GM12878 (cell line): ENCODE measurements at regions of chr20 and their contacts with region 1.

Region 1: GRCh38 chr20:52242237-52243230 is 51.0 kb upstream of the ZFP64 start:
- DNase-seq: no peak
- ATAC-seq: no peak
- H3K4me3 ChIP-seq: no peak overlapping the region
- H3K27ac ChIP-seq: no peak overlapping the region
- H3K4me1 ChIP-seq: no peaks in the 10 kb centered on the region
- H3K27me3 ChIP-seq: no peaks in the 10 kb centered on the region
- CTCF ChIP-seq: peak in 2 of 3 experiments; percentile 6 to 35; a peak in 3 of 6 replicates
- EP300 ChIP-seq: no peak
- POLR2A ChIP-seq: no peak
- RAD21 ChIP-seq: no peak

Region 2: GRCh38 chr20:51695574-51696303 is 546.8 kb before region 1 on chr20:
- CTCF ChIA-PET with region 1: no interaction called
- POLR2A ChIA-PET with region 1: no interaction called
- RAD21 ChIA-PET with region 1: no interaction called
- SMC1A ChIA-PET with region 1: no interaction called
- in situ Hi-C with region 1: no loop called
- intact Hi-C with region 1: no loop called
- DNase-seq: no peak
- ATAC-seq: no peak
- H3K4me3 ChIP-seq: no peak overlapping the region
- H3K27ac ChIP-seq: no peak overlapping the region
- H3K4me1 ChIP-seq: no peaks in the 10 kb centered on the region
- H3K27me3 ChIP-seq: peaks cover 4% of the 10 kb centered on the region in 2 experiments; a peak in 3 of 4 replicates
- CTCF ChIP-seq: no peak
- EP300 ChIP-seq: no peak
- POLR2A ChIP-seq: no peak
- RAD21 ChIP-seq: no peak

Region 3: GRCh38 chr20:52083627-52084232 is 158.8 kb before region 1 on chr20:
- CTCF ChIA-PET with region 1: no interaction called
- POLR2A ChIA-PET with region 1: no interaction called
- RAD21 ChIA-PET with region 1: no interaction called
- SMC1A ChIA-PET with region 1: no interaction called
- in situ Hi-C with region 1: no loop called
- intact Hi-C with region 1: no loop called
- DNase-seq: no peak
- ATAC-seq: peak; percentile 34; the same call in 1 of the 3 replicates
- H3K4me3 ChIP-seq: no peak overlapping the region
- H3K27ac ChIP-seq: no peak overlapping the region
- H3K4me1 ChIP-seq: no peaks in the 10 kb centered on the region
- H3K27me3 ChIP-seq: no peaks in the 10 kb centered on the region
- CTCF ChIP-seq: peak; percentile 35 to 52 (median 40); a peak in 5 of 6 replicates
- EP300 ChIP-seq: no peak
- POLR2A ChIP-seq: no peak
- RAD21 ChIP-seq: peak; percentile 60

Region 4: DNA sequence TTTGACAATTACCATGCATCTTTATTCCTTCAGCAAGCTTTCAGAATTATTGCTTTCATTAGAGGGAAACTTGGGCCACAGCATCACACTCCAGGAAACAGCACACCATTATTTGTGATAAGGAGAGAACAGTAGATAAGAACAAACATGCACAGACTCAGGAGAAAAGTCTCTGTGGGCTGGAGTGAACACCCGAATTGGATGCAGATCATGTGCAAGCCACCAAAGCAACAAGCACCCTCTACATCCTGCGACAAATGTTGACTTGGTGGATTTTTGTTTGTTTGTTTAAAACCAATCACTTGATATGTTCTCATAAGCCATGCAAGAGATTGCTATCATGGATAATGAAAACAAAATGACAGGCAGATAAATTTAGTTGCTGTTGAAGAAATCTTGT is 16.8 kb after region 1 on chr20:
- CTCF ChIA-PET with region 1: no interaction called
- POLR2A ChIA-PET with region 1: no interaction called
- RAD21 ChIA-PET with region 1: no interaction called
- SMC1A ChIA-PET with region 1: no interaction called
- in situ Hi-C with region 1: no loop called
- intact Hi-C with region 1: no loop called
- DNase-seq: no peak
- ATAC-seq: no peak
- H3K4me3 ChIP-seq: no peak overlapping the region
- H3K27ac ChIP-seq: no peak overlapping the region
- H3K4me1 ChIP-seq: no peaks in the 10 kb centered on the region
- H3K27me3 ChIP-seq: 0 out of 4 replicates have a peak, but pooled peaks cover 0 to 2% of the 10 kb centered on the region in 2 experiments
- CTCF ChIP-seq: no peak
- EP300 ChIP-seq: no peak
- POLR2A ChIP-seq: no peak
- RAD21 ChIP-seq: no peak

Region 5: DNA sequence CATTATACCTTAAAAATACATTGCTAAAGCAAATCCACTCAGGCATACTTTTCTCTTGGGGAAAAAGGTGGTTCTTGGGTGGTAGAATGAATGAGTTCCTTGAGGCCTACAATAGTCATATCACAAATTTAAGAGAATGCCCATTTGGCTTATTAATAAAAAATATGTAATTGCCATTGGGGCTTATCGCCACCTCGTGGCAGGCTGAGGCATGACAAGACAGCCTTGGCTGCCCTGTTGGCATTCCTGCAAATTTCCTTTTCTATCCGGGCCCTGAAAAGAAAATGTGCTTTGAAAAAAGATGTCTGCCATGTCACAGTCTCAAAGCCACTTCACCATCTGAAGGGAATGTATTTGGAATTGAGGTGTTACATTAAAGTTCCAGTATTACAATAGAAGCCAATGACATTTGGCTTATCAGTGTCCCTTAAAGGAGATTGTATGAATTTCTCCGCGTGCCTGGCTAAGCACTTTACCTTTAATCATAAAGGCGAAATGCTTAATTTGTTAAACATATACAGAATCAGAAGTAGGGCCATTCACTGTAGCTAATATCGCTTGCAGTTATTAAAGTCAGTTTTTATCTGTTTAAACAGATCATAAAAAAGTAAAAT is 137.3 kb after region 1 on chr20:
- CTCF ChIA-PET with region 1: interaction called, 4 read pairs
- POLR2A ChIA-PET with region 1: no interaction called
- RAD21 ChIA-PET with region 1: no interaction called
- SMC1A ChIA-PET with region 1: no interaction called
- in situ Hi-C with region 1: no loop called
- intact Hi-C with region 1: loop called (anchors 1 kb)
- DNase-seq: no peak
- ATAC-seq: no peak
- H3K4me3 ChIP-seq: no peak overlapping the region
- H3K27ac ChIP-seq: no peak overlapping the region
- H3K4me1 ChIP-seq: no peaks in the 10 kb centered on the region
- H3K27me3 ChIP-seq: no peaks in the 10 kb centered on the region
- CTCF ChIP-seq: peak; percentile 82 to 92 (median 90)
- EP300 ChIP-seq: no peak
- POLR2A ChIP-seq: no peak
- RAD21 ChIP-seq: peak; percentile 65